ENCODE measurements at regions of chr2 and their contacts with region 1.

Region 1: DNA sequence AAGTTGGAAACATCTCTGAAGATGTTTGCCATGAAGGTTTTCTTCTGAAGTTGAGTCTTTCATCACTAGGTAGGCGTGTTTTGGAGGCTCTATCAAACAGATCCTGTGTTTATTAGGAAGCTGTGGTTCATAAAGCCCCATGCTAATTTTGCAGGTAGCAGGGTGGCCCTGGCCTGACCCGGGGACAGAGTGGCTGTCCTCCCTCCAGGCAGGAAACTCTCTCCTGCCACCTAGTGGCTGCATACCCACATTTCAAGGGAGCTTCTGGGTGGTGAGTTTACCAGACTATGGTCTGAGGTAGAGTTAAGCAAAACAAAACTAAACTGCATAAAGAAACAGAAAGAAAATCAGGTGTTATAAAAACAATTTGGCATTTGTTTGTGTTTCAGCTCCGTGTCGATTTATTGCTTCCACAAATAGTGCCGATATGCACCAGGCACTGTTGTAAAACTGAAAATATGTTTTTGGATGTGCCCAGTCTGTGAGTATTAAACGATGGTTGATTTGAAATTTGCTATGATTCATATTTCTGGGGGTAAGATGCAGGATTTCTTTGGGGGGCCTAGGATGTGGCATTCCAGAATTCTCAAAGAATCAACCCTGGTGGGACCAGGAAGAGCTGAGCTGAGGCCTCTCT is 26.0 kb upstream of the IL37 start:
- DNase-seq: peak; percentile 6 to 75 (median 49)
- ATAC-seq: peak; percentile 71 to 84 (median 79)
- H3K4me3 ChIP-seq: no peak overlapping the region
- H3K4me3 Mint-ChIP-seq: no peak overlapping the region
- H3K27ac ChIP-seq: no peak overlapping the region
- H3K27ac Mint-ChIP-seq: peak overlapping the region in 1 of 2 donors; percentile 47
- H3K4me1 ChIP-seq: peaks cover 0 to 6% of the 10 kb centered on the region in 2 experiments
- H3K4me1 Mint-ChIP-seq: peaks cover 6 to 21% (median 13%) of the 10 kb centered on the region in 3 donors
- H3K27me3 ChIP-seq: no peaks in the 10 kb centered on the region
- H3K27me3 Mint-ChIP-seq: no peaks in the 10 kb centered on the region

Region 2: DNA sequence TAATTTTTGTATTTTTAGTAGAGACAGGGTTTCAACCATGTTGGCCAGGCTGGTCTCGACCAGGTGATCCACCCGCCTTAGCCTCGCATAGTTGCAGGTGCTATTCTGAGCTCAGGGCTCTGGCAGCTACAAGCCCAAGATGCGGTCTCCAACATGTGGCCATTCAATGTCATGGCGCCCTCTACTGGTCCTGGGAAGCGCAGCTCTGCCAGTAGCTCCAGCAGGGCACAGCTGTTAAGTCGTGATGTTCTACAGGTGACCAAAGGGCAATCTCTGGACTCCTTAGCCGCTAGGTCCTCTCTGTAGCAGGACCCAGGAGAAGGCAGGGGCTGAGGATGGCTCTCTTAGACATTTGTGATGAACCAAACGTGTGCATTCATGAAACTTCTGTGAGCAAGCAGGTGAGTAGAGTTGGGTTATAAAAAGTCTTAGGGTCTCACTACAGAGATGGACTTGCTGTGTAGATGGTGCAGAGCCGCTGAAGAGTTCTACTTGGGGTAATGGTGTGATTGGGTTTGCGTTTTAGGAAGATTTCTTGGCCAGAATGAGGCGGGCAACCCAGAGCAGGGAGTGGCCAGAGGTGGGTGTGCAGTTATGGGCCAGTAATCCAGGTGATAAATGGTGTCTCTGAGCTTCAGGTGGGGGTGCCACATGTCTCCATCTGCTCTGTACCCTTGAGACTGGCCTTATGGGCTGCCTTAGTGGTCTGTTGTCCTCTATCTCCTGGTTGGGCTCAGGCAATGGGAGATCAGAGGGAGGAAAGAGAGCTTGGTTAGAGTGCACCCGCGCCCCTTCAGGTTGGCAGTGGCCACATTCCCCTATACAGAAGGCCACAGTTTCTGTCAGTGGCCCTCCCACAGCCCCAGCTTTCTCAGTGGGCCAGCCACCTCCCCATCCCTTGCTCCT is 57.0 kb after region 1 on chr2:
- CTCF ChIA-PET with region 1: interaction called in 1 of 2 experiments, 10 read pairs
- POLR2A ChIA-PET with region 1: no interaction called
- DNase-seq: peak in 33 of 35 experiments; percentile 11 to 76 (median 42)
- ATAC-seq: peak; percentile 34 to 58 (median 55)
- H3K4me3 ChIP-seq: no peak overlapping the region
- H3K4me3 Mint-ChIP-seq: no peak overlapping the region
- H3K27ac ChIP-seq: no peak overlapping the region
- H3K27ac Mint-ChIP-seq: no peak overlapping the region
- H3K4me1 ChIP-seq: peaks cover 0 to 5% of the 10 kb centered on the region in 2 experiments
- H3K4me1 Mint-ChIP-seq: peaks cover 0 to 2% (median 0%) of the 10 kb centered on the region in 3 donors
- H3K27me3 ChIP-seq: no peaks in the 10 kb centered on the region
- H3K27me3 Mint-ChIP-seq: no peaks in the 10 kb centered on the region